Activated T-helper 1 cell treated with anti-CD3 and anti-CD28 coated beads, Interleukin-12 subunit alpha, Interleukin-12 subunit beta, Interleukin-2, Interleukin-4 antibody, amounts not matched to agents 30 ng/mL and 10 ng/mL and 1 ng/mL, durations not matched to agents 14 hours and 24 hours and 36 hours (primary cell): ENCODE measurements at regions of chr11 and their contacts with region 1.

Region 1: DNA sequence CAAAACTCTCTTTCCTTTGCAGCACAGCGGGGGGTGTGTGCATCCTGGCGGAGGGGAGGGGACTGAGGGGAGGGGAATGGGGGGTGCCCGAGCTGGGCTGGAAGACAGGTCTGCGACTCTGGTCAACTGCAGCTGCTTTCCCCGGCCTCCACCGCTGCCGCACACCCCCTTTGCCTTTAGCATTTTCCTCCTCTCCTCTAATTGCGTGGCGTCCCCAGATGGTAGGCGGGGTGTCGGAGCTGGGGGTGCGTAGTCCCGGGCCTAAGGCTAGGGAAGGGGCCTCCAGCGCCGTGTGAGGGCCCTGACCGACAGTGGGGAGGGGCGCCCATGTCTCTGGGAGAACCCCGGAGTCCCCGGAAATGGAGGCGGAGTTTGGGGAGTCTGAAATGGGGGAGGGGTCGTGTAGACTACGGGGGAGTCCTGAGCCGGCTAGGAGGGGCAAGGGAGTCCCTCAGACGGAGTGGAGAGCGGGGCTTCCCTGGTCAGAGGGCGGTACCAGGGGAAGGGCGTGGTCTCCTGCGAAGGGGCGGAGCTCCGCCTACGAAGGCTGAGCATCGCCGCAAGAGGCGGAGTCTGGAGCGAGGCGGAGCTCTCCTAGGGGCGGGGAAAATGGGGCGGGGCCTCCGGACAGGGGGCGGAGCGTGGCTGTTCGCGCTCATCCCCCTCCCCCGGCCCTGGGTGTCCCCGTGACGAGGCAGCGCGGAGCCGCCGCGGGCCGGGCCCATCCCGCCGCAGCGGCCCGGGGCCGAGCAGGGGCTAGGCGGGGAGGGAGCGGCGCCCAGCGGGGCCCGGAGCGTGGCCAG is at the start of gene PELI3:
- DNase-seq: peak; percentile 86
- H3K4me3 Mint-ChIP-seq: peak within 1 kb of the TSS; percentile 94
- H3K27ac Mint-ChIP-seq: peak within 1 kb of the TSS; percentile 88
- H3K4me1 Mint-ChIP-seq: peaks cover 28% of the 10 kb centered on the region
- H3K27me3 Mint-ChIP-seq: no peaks in the 10 kb centered on the region
- total RNA-seq, gene PELI3: 15.3 and 15.8 TPM in 2 replicates

Region 2: DNA sequence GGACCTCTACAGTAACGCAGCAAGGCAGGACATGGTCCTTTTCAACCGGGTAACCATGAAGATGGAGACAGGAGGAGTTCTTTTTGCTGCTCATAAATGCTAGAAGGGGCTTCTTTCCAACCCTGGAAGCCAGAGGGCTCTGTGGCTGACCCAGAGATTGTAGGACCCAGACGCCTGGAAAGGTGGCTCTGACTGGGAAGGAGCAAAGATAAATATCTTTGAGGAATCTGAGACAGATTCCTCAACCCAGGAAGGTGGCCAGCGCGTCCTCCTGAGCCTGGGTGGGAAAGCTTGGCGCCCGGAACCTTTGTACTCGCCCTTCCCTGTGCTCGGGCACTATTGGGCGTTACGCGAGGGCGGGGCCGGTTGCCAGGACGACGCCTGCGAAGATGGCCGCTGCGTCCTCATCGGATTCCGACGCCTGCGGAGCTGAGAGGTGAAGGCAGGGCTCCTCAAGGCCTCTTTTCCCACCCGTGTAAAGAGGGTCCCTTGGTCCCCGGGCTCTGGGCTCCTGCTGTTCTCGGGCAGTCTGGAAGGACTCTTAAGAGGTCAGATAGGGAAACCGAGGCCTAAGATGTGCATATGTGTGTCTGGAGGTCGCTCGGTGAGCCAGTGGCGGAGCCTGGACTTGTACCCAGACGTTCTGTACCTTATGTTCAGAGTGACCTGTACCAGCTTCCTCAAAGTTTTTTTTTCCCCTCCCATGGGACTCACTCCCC is 44.0 kb after region 1 on chr11 and contains the start of gene BBS1:
- intact Hi-C with region 1: loop called (anchors 2 kb)
- DNase-seq: peak; percentile 77
- H3K4me3 Mint-ChIP-seq: peak within 1 kb of the TSS; percentile 90
- H3K27ac Mint-ChIP-seq: peak within 1 kb of the TSS; percentile 61
- H3K4me1 Mint-ChIP-seq: peaks cover 10% of the 10 kb centered on the region
- H3K27me3 Mint-ChIP-seq: no peaks in the 10 kb centered on the region
- total RNA-seq, gene BBS1: 18.0 and 18.1 TPM in 2 replicates